Posterior vena cava (tissue), 2 donors: ENCODE measurements at regions of chr9 and their contacts with region 1.

Region 1: GRCh38 chr9:134178768-134179551 is 14.6 kb upstream of the RNU6ATAC start:
- DNase-seq: peak; percentile 91

Region 2: DNA sequence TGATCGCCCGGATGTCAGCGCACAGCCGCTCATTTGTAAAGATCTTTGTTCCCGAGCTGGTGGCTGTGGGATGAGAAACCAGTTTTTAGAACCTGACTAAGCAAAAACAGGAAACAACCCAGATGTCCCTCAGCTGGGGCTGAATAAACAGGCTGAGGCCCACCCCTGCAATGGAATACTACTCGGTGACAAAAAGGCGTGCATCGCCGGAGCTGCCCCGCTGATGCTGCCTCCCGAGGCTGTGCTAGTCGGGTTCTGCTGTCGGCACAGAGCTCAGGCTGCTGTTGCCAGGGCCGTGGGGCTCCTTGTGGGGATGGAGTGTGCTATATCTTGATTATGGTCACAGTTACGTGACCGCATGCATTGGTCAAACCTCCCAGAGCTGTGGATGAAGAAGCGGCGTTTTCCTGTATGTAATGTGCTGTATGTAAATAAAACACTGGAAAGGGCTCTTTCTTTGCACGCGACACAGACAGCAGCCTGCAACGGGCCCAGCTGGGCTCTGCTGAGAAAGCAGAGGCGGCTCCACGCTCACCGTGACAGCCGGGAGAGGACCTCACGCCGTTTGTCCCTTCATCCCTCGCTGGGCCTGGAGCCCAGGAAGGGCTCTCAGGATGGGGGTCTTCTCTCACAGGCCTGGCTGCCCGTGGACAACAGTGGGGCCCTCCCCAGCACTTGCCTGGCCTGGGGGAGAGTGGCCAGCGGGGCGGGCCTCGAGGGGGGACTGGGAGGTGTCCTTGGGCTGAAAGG is 36.9 kb after region 1 on chr9:
- intact Hi-C with region 1: no loop called
- DNase-seq: peak; percentile 71

Region 3: GRCh38 chr9:134325817-134326723 is 147.1 kb after region 1 on chr9 and contains the start of gene RXRA:
- intact Hi-C with region 1: loop called in 1 of 2 experiments (anchors 10 kb)
- DNase-seq: peak; percentile 94
- total RNA-seq, gene RXRA: 41.5 to 44.7 TPM